PC-3 (cell line): ENCODE measurements at regions of chr7 and their contacts with region 1.

Region 1: GRCh38 chr7:5423844-5424688 is 432 bp upstream of the TNRC18 start:
- DNase-seq: peak; percentile 97
- ATAC-seq: no peak; the same call in 1 of the 2 replicates
- H3K4me3 ChIP-seq: peak overlapping the region; percentile 99
- H3K27ac ChIP-seq: peak overlapping the region; percentile 95
- H3K4me1 ChIP-seq: peaks cover 16% of the 10 kb centered on the region
- H3K27me3 ChIP-seq: no peaks in the 10 kb centered on the region
- CTCF ChIP-seq: no peak

Region 2: GRCh38 chr7:5363729-5364128 is 60.3 kb before region 1 on chr7:
- CTCF ChIA-PET with region 1: interaction called, 11 read pairs
- POLR2A ChIA-PET with region 1: no interaction called
- intact Hi-C with region 1: no loop called
- DNase-seq: no peak
- ATAC-seq: no peak
- H3K4me3 ChIP-seq: no peak overlapping the region
- H3K27ac ChIP-seq: no peak overlapping the region
- H3K4me1 ChIP-seq: no peaks in the 10 kb centered on the region
- H3K27me3 ChIP-seq: no peaks in the 10 kb centered on the region
- CTCF ChIP-seq: no peak

Region 3: GRCh38 chr7:5396999-5397663 is 26.9 kb before region 1 on chr7:
- CTCF ChIA-PET with region 1: interaction called, 5 read pairs
- POLR2A ChIA-PET with region 1: interaction called, 24 read pairs
- intact Hi-C with region 1: no loop called
- DNase-seq: peak; percentile 72
- ATAC-seq: peak; percentile 82
- H3K4me3 ChIP-seq: peak overlapping the region; percentile 69
- H3K27ac ChIP-seq: peak overlapping the region; percentile 88
- H3K4me1 ChIP-seq: no peaks in the 10 kb centered on the region
- H3K27me3 ChIP-seq: no peaks in the 10 kb centered on the region
- CTCF ChIP-seq: no peak

Region 4: DNA sequence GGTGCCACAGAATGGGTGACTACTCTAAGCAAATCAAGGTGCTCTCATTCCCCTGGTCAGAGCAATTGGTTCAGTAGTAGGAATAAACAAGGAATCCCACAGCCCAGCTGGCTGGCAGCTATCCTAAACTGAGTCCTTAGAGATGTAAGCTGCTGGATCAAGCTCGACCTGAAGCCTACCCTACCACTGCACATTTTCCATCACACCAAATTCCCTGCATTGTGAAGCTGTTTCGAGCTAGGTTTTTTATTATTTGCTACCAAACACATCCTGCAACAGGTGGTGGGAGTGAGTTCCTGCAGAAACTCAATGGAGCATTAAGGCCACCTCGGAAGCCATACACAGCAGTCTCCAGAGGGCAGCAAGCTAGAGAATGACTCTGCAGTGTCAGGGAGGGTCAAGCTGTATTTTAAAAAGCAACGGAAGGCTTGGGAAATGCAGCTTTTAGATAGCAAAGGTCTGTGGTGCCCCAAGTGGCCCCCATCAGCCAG is 33.2 kb after region 1 on chr7:
- CTCF ChIA-PET with region 1: no interaction called
- POLR2A ChIA-PET with region 1: interaction called, 11 read pairs
- intact Hi-C with region 1: no loop called
- DNase-seq: no peak
- ATAC-seq: no peak
- H3K4me3 ChIP-seq: no peak overlapping the region
- H3K27ac ChIP-seq: no peak overlapping the region
- H3K4me1 ChIP-seq: no peaks in the 10 kb centered on the region
- H3K27me3 ChIP-seq: no peaks in the 10 kb centered on the region
- CTCF ChIP-seq: no peak

Region 5: GRCh38 chr7:5646852-5647251 is 222.8 kb after region 1 on chr7:
- CTCF ChIA-PET with region 1: no interaction called
- POLR2A ChIA-PET with region 1: interaction called, 34 read pairs
- intact Hi-C with region 1: no loop called
- DNase-seq: no peak
- ATAC-seq: no peak
- H3K4me3 ChIP-seq: no peak overlapping the region
- H3K27ac ChIP-seq: no peak overlapping the region
- H3K4me1 ChIP-seq: peaks cover 24% of the 10 kb centered on the region
- H3K27me3 ChIP-seq: no peaks in the 10 kb centered on the region
- CTCF ChIP-seq: no peak